Activated T-helper 2 cell treated with anti-CD3 and anti-CD28 coated beads, Interferon-gamma antibody, Interleukin-2, Interleukin-4, amounts not matched to agents 10 μg/mL and 5 μg/mL and 100 μg/mL, durations not matched to agents 14 hours and 24 hours and 36 hours (primary cell): ENCODE measurements at regions of chr9 and their contacts with region 1.

Region 1: DNA sequence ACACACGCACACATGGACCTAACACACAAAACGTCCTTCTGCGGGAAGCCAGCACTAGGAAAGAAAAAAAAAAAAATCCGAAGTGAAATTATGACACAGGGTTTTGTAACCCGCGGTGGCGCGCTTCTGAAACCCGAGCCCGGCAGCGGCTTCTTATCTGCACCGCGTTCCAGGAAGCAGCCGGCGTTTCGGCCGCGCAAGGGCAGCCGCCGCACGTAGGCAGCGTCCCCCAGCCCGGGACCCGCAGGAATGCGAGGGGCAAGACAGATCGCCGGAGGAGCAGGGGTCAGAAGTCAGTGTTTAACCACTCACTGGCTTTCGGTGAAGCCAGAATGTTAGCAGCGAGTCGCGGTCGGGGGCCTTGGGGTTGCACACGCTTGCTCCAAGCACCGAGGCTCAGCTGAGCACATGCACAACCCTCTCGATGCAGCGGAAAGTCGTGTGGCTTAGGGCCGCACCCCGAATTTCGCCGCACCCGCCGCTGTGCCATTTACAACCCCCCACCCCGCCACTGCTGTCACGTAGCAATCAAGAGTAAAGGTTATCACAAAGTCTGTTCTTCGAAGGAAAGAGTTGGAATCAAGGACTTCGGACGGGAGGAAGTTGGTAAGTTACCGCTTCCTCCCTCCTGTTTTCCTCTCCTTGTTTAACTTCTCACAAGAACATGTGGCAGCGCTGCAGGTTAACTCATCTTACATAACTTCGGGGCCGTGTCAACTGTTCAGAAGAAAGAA is 167.9 kb downstream of the AUH start:
- DNase-seq: peak; percentile 87
- H3K4me3 Mint-ChIP-seq: peak overlapping the region; percentile 77
- H3K27ac Mint-ChIP-seq: peak overlapping the region; percentile 96
- H3K4me1 Mint-ChIP-seq: peaks cover 66% of the 10 kb centered on the region
- H3K27me3 Mint-ChIP-seq: no peaks in the 10 kb centered on the region

Region 2: GRCh38 chr9:90914868-90915483 is 278.8 kb before region 1 on chr9:
- intact Hi-C with region 1: loop called (anchors 10 kb)
- DNase-seq: peak; percentile 54
- H3K4me3 Mint-ChIP-seq: no peak overlapping the region
- H3K27ac Mint-ChIP-seq: peak overlapping the region; percentile 62
- H3K4me1 Mint-ChIP-seq: peaks cover 14% of the 10 kb centered on the region
- H3K27me3 Mint-ChIP-seq: no peaks in the 10 kb centered on the region

Region 3: GRCh38 chr9:91047993-91048607 is 145.7 kb before region 1 on chr9:
- intact Hi-C with region 1: loop called (anchors 1 kb)
- DNase-seq: peak; percentile 56
- H3K4me3 Mint-ChIP-seq: peak overlapping the region; percentile 28
- H3K27ac Mint-ChIP-seq: peak overlapping the region; percentile 90
- H3K4me1 Mint-ChIP-seq: peaks cover 73% of the 10 kb centered on the region
- H3K27me3 Mint-ChIP-seq: no peaks in the 10 kb centered on the region

Region 4: GRCh38 chr9:91131433-91131839 is 62.4 kb before region 1 on chr9:
- intact Hi-C with region 1: loop called (anchors 1 kb)
- DNase-seq: peak; percentile 81
- H3K4me3 Mint-ChIP-seq: peak overlapping the region; percentile 49
- H3K27ac Mint-ChIP-seq: peak overlapping the region; percentile 98
- H3K4me1 Mint-ChIP-seq: peaks cover 49% of the 10 kb centered on the region
- H3K27me3 Mint-ChIP-seq: no peaks in the 10 kb centered on the region

Region 5: GRCh38 chr9:91177661-91178280 is 16.1 kb before region 1 on chr9:
- intact Hi-C with region 1: loop called (anchors 1 kb)
- DNase-seq: peak; percentile 30
- H3K4me3 Mint-ChIP-seq: peak overlapping the region; percentile 41
- H3K27ac Mint-ChIP-seq: peak overlapping the region; percentile 99
- H3K4me1 Mint-ChIP-seq: peaks cover 55% of the 10 kb centered on the region
- H3K27me3 Mint-ChIP-seq: no peaks in the 10 kb centered on the region

Region 6: DNA sequence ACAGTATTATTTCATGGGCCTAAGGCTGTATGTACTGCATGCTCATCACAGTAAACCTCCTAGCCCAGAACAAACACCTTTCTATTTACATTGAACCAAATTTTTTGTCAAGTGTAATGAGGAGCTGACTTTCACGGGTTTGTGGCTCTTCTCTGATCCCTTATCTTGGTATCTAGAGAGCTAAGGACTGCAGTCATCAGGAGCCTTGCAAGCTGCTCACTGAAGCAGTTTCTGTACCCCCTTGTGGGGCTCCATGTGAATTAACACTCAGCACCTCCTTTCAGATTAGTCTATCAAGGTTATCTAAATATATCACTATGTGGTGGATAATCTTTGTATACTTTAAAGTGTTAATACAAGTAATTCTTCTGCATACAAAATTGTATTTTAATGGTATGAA is 59.7 kb after region 1 on chr9:
- intact Hi-C with region 1: no loop called
- DNase-seq: peak; percentile 67
- H3K4me3 Mint-ChIP-seq: no peak overlapping the region
- H3K27ac Mint-ChIP-seq: no peak overlapping the region
- H3K4me1 Mint-ChIP-seq: peaks cover 62% of the 10 kb centered on the region
- H3K27me3 Mint-ChIP-seq: no peaks in the 10 kb centered on the region

Region 7: GRCh38 chr9:91346652-91347051 is 152.8 kb after region 1 on chr9:
- intact Hi-C with region 1: loop called (anchors 5 kb)
- DNase-seq: no peak
- H3K4me3 Mint-ChIP-seq: no peak overlapping the region
- H3K27ac Mint-ChIP-seq: peak overlapping the region; percentile 44
- H3K4me1 Mint-ChIP-seq: peaks cover 61% of the 10 kb centered on the region
- H3K27me3 Mint-ChIP-seq: no peaks in the 10 kb centered on the region

Region 8: GRCh38 chr9:91711755-91712601 is 518.2 kb after region 1 on chr9:
- intact Hi-C with region 1: loop called (anchors 5 kb)
- DNase-seq: peak; percentile 72
- H3K4me3 Mint-ChIP-seq: no peak overlapping the region
- H3K27ac Mint-ChIP-seq: no peak overlapping the region
- H3K4me1 Mint-ChIP-seq: peaks cover 18% of the 10 kb centered on the region
- H3K27me3 Mint-ChIP-seq: peaks cover 8% of the 10 kb centered on the region